K562 (cell line): ENCODE measurements at regions of chr17 and their contacts with region 1.

Region 1: GRCh38 chr17:43316522-43317142 is 82.2 kb upstream of the ARL4D start:
- DNase-seq: peak; percentile 13 to 45 (median 15)
- ATAC-seq: no peak
- H3K4me3 ChIP-seq: no peak overlapping the region
- H3K27ac ChIP-seq: no peak overlapping the region; the same call in 2 of the 3 replicates
- H3K4me1 ChIP-seq: peaks cover 2 to 11% of the 10 kb centered on the region in 2 experiments; a peak in 3 of 5 replicates
- H3K27me3 ChIP-seq: no peaks in the 10 kb centered on the region
- CTCF ChIP-seq: no peak
- EP300 ChIP-seq: no peak
- POLR2A ChIP-seq: no peak
- RAD21 ChIP-seq: no peak

Region 2: DNA sequence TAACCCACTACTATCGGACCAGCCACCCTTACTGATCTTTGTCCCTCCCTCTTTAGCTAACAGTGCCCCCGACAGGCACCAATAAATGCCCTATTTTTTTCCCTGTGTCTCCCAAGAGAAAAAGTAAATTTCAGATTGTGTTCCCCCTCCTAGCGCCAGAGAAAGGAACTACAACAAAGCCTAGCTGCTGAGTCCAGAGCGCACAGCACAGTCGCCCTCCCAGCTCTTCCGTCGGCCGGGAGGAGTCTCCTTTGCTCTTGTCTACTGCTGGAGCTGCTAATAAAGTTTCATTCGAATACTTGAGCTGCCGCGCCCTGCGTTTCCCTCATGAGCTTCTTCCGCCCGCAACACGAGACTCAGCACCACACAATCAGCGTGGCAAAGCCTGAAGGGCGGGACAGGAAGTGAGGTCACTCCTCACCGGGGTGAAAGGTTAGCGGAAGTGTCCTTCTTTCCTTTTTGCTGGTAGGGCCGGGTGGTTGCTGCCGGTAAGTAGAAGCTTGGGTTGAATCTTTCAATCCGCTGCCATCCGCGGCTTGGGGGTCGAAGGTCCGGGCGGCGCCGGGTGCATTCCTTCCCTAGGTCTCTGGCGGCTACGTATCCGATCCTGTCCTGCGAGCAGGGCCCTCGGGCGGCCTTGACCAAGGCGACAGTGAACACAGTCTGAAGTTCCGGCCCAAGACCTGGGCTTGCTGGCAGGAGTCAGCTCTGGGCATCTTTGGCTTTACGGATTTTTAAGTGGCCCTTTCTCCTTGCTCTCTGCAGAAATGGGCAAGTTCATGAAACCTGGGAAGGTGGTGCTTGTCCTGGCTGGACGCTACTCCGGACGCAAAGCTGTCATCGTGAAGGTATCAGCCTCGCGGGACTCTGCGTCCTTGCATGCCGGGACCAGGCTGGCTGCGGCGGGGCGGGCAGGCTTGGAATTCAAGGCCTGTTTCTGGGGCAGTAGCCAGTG is 318.4 kb before region 1 on chr17 and contains the start of gene RPL27:
- CTCF ChIA-PET with region 1: no interaction called
- POLR2A ChIA-PET with region 1: interaction called, 28 read pairs
- in situ Hi-C with region 1: no loop called
- intact Hi-C with region 1: no loop called
- DNase-seq: peak; percentile 90 to 99 (median 92)
- ATAC-seq: peak; percentile 96
- H3K4me3 ChIP-seq: peak within 1 kb of the TSS; percentile 93
- H3K27ac ChIP-seq: peak within 1 kb of the TSS; percentile 94
- H3K4me1 ChIP-seq: peaks cover 14 to 18% of the 10 kb centered on the region in 2 experiments; a peak in 4 of 5 replicates
- H3K27me3 ChIP-seq: no peaks in the 10 kb centered on the region
- CTCF ChIP-seq: peak; percentile 92 to 96 (median 95)
- EP300 ChIP-seq: peak; percentile 81
- POLR2A ChIP-seq: peak; percentile 99
- RAD21 ChIP-seq: peak; percentile 58 to 72
- polyA plus RNA-seq, gene RPL27: 3,710 to 4,120 TPM

Region 3: GRCh38 chr17:43094129-43094835 is 222.3 kb before region 1 on chr17:
- CTCF ChIA-PET with region 1: no interaction called
- POLR2A ChIA-PET with region 1: interaction called, 4 read pairs
- in situ Hi-C with region 1: loop called (anchors 10 kb)
- intact Hi-C with region 1: no loop called
- DNase-seq: no peak
- ATAC-seq: no peak
- H3K4me3 ChIP-seq: no peak overlapping the region
- H3K27ac ChIP-seq: no peak overlapping the region
- H3K4me1 ChIP-seq: no peaks in the 10 kb centered on the region
- H3K27me3 ChIP-seq: no peaks in the 10 kb centered on the region
- CTCF ChIP-seq: no peak
- EP300 ChIP-seq: no peak
- POLR2A ChIP-seq: no peak
- RAD21 ChIP-seq: no peak

Region 4: DNA sequence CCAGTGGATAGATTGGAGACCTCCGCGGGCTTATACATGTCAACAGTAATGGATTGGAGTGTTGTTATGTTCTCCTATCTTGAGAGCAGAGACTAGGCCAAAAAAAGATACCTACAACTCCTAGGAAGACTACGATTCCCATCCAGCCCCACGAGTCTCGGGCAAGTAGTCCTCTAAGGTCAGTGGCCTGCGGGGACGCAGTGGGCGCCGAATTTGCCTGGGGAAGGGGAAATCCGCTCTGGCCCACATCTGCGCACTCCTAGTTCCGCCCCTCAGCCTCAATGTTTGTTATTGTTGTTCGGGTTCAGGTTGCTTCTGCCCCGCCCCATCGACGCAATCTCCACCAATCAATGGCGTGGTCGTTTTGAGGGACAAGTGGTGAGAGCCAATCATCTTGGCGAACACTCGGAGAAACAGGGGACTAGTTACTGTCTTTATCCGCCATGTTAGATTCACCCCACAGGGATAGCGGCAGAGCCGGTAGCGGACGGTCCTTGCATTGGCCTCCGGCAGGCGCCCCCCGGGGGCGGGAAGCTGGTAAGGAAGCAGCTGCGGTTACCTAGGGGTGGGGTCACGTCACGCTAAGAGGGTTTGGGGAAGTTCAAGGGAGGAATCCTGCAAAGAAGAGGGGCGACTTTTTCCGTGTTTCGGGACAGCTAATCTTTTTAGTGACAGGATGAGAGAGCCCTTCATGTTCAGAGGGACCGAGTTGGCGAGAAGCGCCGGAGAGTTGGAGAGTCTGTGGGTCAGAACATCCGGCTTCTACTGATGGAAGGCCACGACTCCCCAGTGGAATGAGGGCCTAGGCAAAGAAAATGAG is 145.7 kb before region 1 on chr17 and contains the start of gene NBR1:
- CTCF ChIA-PET with region 1: no interaction called
- POLR2A ChIA-PET with region 1: interaction called, 42 read pairs
- in situ Hi-C with region 1: no loop called
- intact Hi-C with region 1: no loop called
- DNase-seq: peak; percentile 92 to 99 (median 96)
- ATAC-seq: peak; percentile 92
- H3K4me3 ChIP-seq: peak within 1 kb of the TSS; percentile 84
- H3K27ac ChIP-seq: peak within 1 kb of the TSS; percentile 92
- H3K4me1 ChIP-seq: peaks cover 3 to 8% of the 10 kb centered on the region in 2 experiments; a peak in 3 of 5 replicates
- H3K27me3 ChIP-seq: no peaks in the 10 kb centered on the region
- CTCF ChIP-seq: peak; percentile 53 to 71 (median 64); a peak in 5 of 6 replicates
- EP300 ChIP-seq: peak; percentile 58
- POLR2A ChIP-seq: peak; percentile 85
- RAD21 ChIP-seq: peak in 1 of 2 experiments; percentile 35; a peak in 2 of 4 replicates
- polyA plus RNA-seq, gene NBR1: 4.2 to 7.5 TPM

Region 5: DNA sequence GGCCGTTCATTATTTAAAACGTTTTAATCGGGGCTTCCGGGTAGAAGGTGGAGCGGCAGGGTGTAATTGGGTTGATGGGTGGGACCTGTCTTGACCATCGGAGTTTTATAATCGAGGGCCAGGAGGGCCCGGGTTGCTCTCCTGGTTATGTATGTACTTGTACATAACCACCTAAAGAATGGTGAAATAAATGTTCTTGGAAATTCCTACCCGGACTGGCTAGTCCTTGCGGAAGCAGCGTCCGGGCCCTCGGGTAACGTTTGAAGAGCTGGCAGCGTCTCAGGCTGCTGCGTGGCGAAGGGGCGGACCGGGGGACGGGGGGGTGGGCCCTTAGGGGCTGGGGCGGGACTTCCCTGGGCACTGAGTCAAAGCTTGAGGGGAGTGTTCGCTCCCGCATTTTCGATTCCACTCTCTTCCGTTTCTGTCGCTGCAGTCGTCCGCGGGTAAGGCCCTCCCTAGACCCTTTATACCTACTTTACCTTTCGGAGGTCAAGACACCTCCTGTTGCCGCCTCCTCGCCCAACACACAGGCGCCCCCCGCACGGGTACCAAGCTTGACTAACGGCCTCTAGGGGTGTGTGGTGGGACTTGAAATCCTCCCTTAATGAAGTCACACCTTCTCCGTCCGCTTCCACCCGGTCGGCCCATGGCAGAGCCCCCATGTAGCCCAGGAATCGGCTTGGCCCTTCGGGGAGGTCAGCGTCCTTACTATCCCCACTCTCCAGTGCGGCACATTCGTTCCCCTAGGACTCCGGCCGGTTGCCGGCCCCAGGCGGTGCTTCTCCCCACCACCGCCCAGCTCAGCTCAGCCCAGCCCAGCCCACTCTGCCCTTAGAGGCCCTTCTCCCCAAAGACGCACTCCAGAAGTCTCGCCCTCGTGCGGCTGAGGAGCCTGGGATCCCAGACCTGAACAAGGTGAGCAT is 104.9 kb before region 1 on chr17 and contains the start of gene TMEM106A:
- CTCF ChIA-PET with region 1: no interaction called
- POLR2A ChIA-PET with region 1: interaction called, 89 read pairs
- in situ Hi-C with region 1: no loop called
- intact Hi-C with region 1: no loop called
- DNase-seq: no peak
- ATAC-seq: no peak; the same call in 1 of the 3 replicates
- H3K4me3 ChIP-seq: no peak within 1 kb of the TSS
- H3K27ac ChIP-seq: no peak within 1 kb of the TSS
- H3K4me1 ChIP-seq: peaks cover 3 to 9% of the 10 kb centered on the region in 2 experiments; a peak in 2 of 5 replicates
- H3K27me3 ChIP-seq: no peaks in the 10 kb centered on the region
- CTCF ChIP-seq: no peak
- EP300 ChIP-seq: no peak
- POLR2A ChIP-seq: no peak
- RAD21 ChIP-seq: no peak
- polyA plus RNA-seq, gene TMEM106A: 0.03 to 0.07 TPM

Region 6: GRCh38 chr17:43388359-43389045 is 71.9 kb after region 1 on chr17:
- CTCF ChIA-PET with region 1: interaction called, 3 read pairs
- POLR2A ChIA-PET with region 1: interaction called, 10 read pairs
- in situ Hi-C with region 1: no loop called
- intact Hi-C with region 1: no loop called
- DNase-seq: peak; percentile 77 to 89 (median 82)
- ATAC-seq: peak; percentile 94
- H3K4me3 ChIP-seq: peak overlapping the region; percentile 42
- H3K27ac ChIP-seq: peak overlapping the region; percentile 86
- H3K4me1 ChIP-seq: peaks cover 5 to 12% of the 10 kb centered on the region in 2 experiments; a peak in 2 of 5 replicates
- H3K27me3 ChIP-seq: no peaks in the 10 kb centered on the region
- CTCF ChIP-seq: no peak
- EP300 ChIP-seq: no peak
- POLR2A ChIP-seq: peak; percentile 81
- RAD21 ChIP-seq: no peak